A549 (cell line): ENCODE measurements at regions of chr15 and their contacts with region 1.

Region 1: GRCh38 chr15:68924866-68925560 is 5.3 kb upstream of the SPESP1 start:
- DNase-seq: peak; percentile 78 to 90
- ATAC-seq: peak; percentile 96 to 98
- H3K4me3 ChIP-seq: no peak overlapping the region
- H3K27ac ChIP-seq: no peak overlapping the region
- H3K4me1 ChIP-seq: no peaks in the 10 kb centered on the region
- CTCF ChIP-seq: peak; percentile 97
- EP300 ChIP-seq: no peak
- POLR2A ChIP-seq: no peak
- RAD21 ChIP-seq: peak; percentile 96 to 98

Region 2: GRCh38 chr15:68578174-68578979 is 346.6 kb before region 1 on chr15:
- CTCF ChIA-PET with region 1: interaction called, 12 read pairs
- POLR2A ChIA-PET with region 1: no interaction called
- DNase-seq: peak in 1 of 2 experiments; percentile 47
- ATAC-seq: peak; percentile 54 to 71
- H3K4me3 ChIP-seq: peak overlapping the region; percentile 63
- H3K27ac ChIP-seq: peak overlapping the region; percentile 67 to 81
- H3K4me1 ChIP-seq: 0 out of 3 replicates have a peak, but pooled peaks cover 4% of the 10 kb centered on the region
- CTCF ChIP-seq: peak; percentile 35; the same call in 2 of the 3 replicates
- EP300 ChIP-seq: no peak
- POLR2A ChIP-seq: no peak; the same call in 1 of the 2 replicates
- RAD21 ChIP-seq: peak in 1 of 2 experiments; percentile 43; a peak in 3 of 5 replicates

Region 3: GRCh38 chr15:68730471-68730919 is 194.5 kb before region 1 on chr15:
- CTCF ChIA-PET with region 1: interaction called, 12 read pairs
- POLR2A ChIA-PET with region 1: no interaction called
- DNase-seq: peak; percentile 31 to 68
- ATAC-seq: peak; percentile 44 to 81; a peak in 3 of 6 replicates
- H3K4me3 ChIP-seq: no peak overlapping the region
- H3K27ac ChIP-seq: no peak overlapping the region
- H3K4me1 ChIP-seq: no peaks in the 10 kb centered on the region
- CTCF ChIP-seq: peak; percentile 65
- EP300 ChIP-seq: no peak
- POLR2A ChIP-seq: no peak
- RAD21 ChIP-seq: peak; percentile 80

Region 4: DNA sequence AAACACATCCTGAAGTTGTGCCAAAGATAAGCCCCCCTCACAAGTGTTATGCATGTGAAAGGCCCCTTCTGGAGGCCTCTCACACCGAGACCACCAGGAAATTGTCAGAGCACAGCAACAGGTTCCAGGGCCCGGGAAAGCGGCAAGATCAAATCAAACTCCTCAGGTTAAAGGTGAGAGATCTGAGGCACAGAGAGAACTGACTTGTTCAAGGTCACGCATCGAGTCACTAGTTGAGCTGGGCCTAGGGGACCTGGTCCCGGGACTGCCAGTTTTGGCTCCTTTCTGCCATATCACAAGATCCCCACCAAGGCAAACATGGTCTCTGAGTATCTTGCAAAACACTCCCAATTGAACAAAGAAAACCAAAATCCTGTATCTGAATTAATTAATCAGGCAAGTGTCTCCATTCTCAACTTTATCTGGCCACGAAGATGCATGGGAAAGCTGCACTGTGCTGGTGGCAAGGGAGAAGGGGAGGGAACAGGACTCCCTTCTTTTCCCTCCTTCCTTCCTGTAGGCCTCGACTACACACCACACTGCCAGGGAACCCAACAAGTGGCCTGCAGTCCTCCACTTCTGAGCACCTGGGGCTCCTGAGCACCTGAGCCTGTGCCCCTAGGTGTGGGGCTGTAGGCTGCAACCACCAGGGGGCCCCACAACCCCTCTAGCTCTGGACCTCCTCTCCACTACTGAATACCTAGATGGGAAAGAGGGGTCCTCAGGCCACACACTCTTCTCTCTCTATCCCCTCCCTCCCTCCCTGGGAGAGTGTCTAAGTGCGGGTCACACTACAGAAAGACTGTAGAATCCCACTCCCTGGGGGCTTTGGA is 141.6 kb before region 1 on chr15:
- CTCF ChIA-PET with region 1: interaction called, 14 read pairs
- POLR2A ChIA-PET with region 1: no interaction called
- DNase-seq: peak; percentile 39 to 75
- ATAC-seq: peak; percentile 72 to 94
- H3K4me3 ChIP-seq: no peak overlapping the region
- H3K27ac ChIP-seq: no peak overlapping the region
- H3K4me1 ChIP-seq: peaks cover 10% of the 10 kb centered on the region; the same call in 1 of the 3 replicates
- CTCF ChIP-seq: peak; percentile 71
- EP300 ChIP-seq: no peak
- POLR2A ChIP-seq: no peak
- RAD21 ChIP-seq: peak; percentile 62 to 68

Region 5: GRCh38 chr15:68885070-68885469 is 39.9 kb before region 1 on chr15:
- CTCF ChIA-PET with region 1: interaction called, 13 read pairs
- POLR2A ChIA-PET with region 1: no interaction called
- DNase-seq: no peak
- ATAC-seq: no peak
- H3K4me3 ChIP-seq: no peak overlapping the region
- H3K27ac ChIP-seq: no peak overlapping the region
- H3K4me1 ChIP-seq: peaks cover 9% of the 10 kb centered on the region; the same call in 2 of the 3 replicates
- CTCF ChIP-seq: no peak
- EP300 ChIP-seq: no peak
- POLR2A ChIP-seq: no peak
- RAD21 ChIP-seq: no peak

Region 6: GRCh38 chr15:68909601-68910100 is 15.4 kb before region 1 on chr15:
- CTCF ChIA-PET with region 1: interaction called, 33 read pairs
- POLR2A ChIA-PET with region 1: no interaction called
- DNase-seq: no peak
- ATAC-seq: no peak
- H3K4me3 ChIP-seq: no peak overlapping the region
- H3K27ac ChIP-seq: no peak overlapping the region
- H3K4me1 ChIP-seq: no peaks in the 10 kb centered on the region
- CTCF ChIP-seq: no peak
- EP300 ChIP-seq: no peak
- POLR2A ChIP-seq: no peak
- RAD21 ChIP-seq: no peak

Region 7: GRCh38 chr15:69031013-69032001 is 106.3 kb after region 1 on chr15:
- CTCF ChIA-PET with region 1: interaction called, 18 read pairs
- POLR2A ChIA-PET with region 1: no interaction called
- DNase-seq: peak; percentile 82
- ATAC-seq: peak; percentile 87 to 93
- H3K4me3 ChIP-seq: peak overlapping the region; percentile 47
- H3K27ac ChIP-seq: peak overlapping the region; percentile 57 to 78
- H3K4me1 ChIP-seq: peaks cover 23% of the 10 kb centered on the region
- CTCF ChIP-seq: peak; percentile 90
- EP300 ChIP-seq: no peak
- POLR2A ChIP-seq: 0 out of 2 replicates have a peak, but pooled peaks have one; percentile 6
- RAD21 ChIP-seq: peak; percentile 57 to 69